Gastrocnemius medialis (tissue), 4 donors: ENCODE measurements at regions of chr16 and their contacts with region 1.

Region 1: DNA sequence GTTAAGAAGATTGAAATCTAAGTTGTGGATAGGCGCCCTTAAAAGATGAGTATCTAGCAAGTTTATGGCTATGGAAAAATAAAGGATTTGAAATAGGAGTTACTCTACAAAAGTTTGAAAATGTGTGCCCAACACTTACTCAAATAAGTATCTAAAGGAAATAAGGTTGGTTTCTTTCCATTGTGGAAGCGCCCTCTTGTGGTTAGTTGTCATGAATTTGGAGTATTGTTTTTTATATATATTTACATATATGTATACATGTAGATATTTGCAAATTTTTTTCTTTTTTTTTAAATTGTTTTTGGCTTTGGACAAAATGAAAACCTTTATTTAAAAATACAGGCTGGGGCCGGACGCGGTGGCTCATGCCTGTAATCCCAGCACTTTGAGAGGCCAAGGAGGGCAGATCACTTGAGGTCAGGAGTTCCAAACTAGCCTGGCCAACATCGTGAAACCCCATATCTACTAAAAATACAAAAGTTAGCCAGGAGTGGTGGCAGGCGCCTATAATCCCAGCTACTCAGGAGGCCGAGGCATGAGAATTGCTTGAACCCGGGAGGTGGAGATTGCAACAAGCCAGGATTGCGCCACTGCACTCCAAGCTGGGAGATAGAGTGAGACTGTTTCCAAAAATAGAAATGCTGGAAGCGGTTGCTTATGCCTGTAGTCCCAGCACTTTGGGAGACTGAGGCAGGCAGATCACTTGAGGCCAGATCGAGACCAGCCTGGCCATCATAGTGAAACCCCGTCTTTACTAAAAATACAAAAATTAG is 24.0 kb upstream of the VPS4A start:
- DNase-seq: peak; percentile 76 to 93
- ATAC-seq: peak; percentile 97 to 98
- H3K4me3 ChIP-seq: no peak overlapping the region
- H3K27ac ChIP-seq: peak overlapping the region; percentile 48 to 80 (median 70)
- H3K4me1 ChIP-seq: peaks cover 7 to 9% of the 10 kb centered on the region in 2 donors
- H3K27me3 ChIP-seq: no peaks in the 10 kb centered on the region
- CTCF ChIP-seq: peak; percentile 46 to 77 (median 69)
- POLR2A ChIP-seq: no peak

Region 2: DNA sequence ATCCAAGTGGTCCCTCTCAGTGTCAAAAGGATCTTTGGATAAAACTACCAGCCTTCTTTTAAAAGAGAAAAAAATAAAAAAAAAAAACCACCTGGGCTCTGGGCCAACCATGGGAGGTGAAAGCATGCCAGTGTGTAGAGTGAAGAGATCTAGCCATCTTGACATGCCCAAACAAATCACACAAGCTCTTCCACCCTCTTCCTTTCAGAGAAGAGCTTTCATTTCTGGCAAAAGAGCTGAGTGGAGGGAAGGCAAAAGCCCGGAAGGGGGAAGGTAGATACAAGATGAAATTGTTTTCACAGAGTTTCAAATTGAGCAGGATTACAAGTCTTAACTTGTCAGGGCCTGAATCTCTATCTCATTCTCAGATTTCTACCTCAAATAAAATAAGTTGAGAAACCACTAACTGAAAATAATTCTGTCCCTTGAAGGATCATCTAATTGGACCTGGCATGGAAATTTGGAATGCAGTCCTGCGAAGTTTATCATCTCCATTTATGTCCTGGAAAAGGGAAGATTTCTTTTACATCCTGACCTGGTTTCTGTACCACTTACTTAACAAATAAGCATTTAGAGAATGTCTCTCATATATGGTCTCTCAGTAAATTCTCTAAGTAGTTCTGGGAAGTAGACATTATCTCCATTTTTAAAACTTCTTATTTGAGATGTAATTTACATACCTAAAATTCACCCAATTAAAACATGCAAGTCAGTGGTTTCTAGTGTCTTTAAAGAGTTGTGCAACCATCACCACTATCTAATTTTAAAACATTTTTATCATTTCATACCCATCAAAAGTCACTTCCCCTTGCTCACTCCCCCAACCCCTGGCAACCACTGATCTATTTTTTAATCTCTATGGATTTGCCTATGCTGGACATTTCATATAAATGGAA is 350.1 kb before region 1 on chr16:
- in situ Hi-C with region 1: no loop called
- intact Hi-C with region 1: no loop called
- DNase-seq: no peak
- ATAC-seq: no peak
- H3K4me3 ChIP-seq: no peak overlapping the region
- H3K27ac ChIP-seq: no peak overlapping the region
- H3K4me1 ChIP-seq: no peaks in the 10 kb centered on the region
- H3K27me3 ChIP-seq: no peaks in the 10 kb centered on the region
- CTCF ChIP-seq: no peak
- POLR2A ChIP-seq: no peak

Region 3: DNA sequence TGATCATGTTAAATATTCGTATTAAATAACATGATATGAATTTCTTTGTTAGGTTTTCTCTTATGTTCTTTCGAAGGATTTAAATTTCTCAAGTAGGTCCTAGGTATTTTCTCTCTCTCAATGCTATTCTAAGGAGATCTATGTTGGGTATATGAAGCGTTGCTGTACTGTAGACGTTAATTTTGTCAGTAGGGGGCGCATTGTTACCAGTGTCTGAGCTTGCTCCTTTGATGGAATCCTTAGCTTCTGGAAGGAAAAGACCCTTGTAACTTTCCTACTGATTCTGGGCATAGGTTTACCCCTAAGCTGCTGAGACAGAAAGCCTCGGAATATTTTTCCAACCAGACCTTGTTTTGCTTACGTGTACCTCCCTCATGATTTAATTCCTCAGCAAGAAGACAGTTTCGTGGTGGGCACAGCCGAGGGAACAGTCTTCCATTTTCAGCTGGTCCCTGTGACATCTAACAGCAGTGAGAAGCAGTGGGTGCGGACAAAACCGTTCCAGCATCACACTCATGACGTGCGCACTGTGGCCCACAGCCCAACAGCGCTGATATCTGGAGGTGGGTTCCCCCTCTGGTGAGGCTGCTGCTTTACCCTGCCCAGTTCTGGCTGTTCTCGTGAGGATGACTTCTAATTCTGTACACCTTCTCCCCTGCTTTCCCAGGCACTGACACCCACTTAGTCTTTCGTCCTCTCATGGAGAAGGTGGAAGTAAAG is 136.8 kb before region 1 on chr16:
- in situ Hi-C with region 1: loop called (anchors 5 to 25 kb)
- intact Hi-C with region 1: loop called (anchors 1 kb)
- DNase-seq: peak in 1 of 2 donors; percentile 25
- ATAC-seq: peak; percentile 59 to 61
- H3K4me3 ChIP-seq: no peak overlapping the region
- H3K27ac ChIP-seq: no peak overlapping the region
- H3K4me1 ChIP-seq: peaks cover 0 to 6% of the 10 kb centered on the region in 2 donors
- H3K27me3 ChIP-seq: no peaks in the 10 kb centered on the region
- CTCF ChIP-seq: peak; percentile 57 to 80 (median 69)
- POLR2A ChIP-seq: no peak